ENCODE measurements at regions of chr19 and their contacts with region 1.

Region 1: DNA sequence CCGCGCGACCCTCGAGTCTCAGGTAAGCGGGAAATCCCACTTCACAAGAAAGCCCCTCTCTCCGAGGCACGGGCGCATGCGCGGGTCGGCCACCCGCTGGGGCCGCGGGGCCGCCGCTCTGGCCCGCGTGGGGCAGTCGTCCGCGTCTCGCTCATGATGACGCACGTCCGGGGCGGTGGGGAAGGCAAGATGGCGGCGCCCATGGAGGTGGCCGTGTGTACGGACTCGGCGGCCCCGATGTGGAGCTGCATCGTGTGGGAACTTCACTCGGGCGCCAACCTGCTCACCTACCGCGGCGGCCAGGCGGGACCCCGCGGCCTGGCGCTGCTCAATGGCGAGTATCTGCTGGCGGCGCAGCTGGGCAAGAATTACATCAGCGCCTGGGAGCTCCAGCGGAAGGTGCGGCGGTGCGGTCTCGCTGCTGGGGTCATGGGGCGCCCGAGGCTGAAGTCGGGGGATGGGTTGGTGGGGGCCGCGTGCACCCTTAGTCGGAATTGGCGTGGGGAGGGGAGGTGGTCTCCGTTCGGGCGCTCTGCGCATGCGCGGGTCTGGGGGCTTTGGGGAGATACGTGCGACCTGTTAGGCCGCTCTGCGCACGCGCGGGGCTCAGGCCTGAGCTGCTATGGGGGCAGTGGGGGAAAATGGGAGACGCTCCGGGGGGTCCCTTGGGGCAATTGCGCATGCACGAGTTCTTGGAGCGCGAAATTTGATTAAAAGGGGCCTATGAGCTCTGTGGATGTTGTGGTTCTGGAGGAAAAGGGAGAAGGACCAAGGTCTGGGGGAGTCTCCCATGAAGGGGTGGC is at the start of gene WDR18:
- H3K4me3 ChIP-seq: peak within 1 kb of the TSS; percentile 99
- H3K27ac ChIP-seq: peak within 1 kb of the TSS; percentile 90
- H3K4me1 ChIP-seq: peaks cover 2% of the 10 kb centered on the region; the same call in 1 of the 2 replicates
- CTCF ChIP-seq: peak; percentile 90

Region 2: DNA sequence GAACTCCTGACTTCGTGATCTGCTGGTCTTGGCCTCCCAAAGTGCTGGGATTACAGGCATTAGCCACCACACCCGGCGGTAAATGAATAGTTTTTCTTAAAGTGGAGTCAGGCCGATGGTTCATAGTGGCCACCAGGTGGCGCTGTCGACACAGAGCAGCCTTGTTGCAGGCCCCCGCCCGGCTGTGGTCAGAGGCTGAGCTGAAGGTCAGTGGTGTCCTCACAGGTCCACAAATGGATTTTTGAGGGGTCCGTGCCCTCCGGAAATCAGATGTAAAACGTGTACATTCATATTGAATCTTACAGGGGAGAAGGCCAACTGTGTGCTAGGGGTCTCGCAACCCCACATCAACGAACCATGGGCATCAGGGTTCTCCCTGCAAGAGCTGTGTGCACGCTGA is 13.7 kb before region 1 on chr19:
- CTCF ChIA-PET with region 1: interaction called, 11 read pairs
- POLR2A ChIA-PET with region 1: no interaction called
- H3K4me3 ChIP-seq: no peak overlapping the region
- H3K27ac ChIP-seq: no peak overlapping the region
- H3K4me1 ChIP-seq: no peaks in the 10 kb centered on the region
- CTCF ChIP-seq: peak; percentile 67

Region 3: GRCh38 chr19:996051-996838 is 11.9 kb after region 1 on chr19:
- CTCF ChIA-PET with region 1: interaction called, 16 read pairs
- POLR2A ChIA-PET with region 1: interaction called, 15 read pairs
- H3K4me3 ChIP-seq: peak overlapping the region; percentile 14
- H3K27ac ChIP-seq: no peak overlapping the region
- H3K4me1 ChIP-seq: peaks cover 7% of the 10 kb centered on the region
- CTCF ChIP-seq: no peak

Measured in HEK293 (cell line).